Panc1 (cell line): ENCODE measurements at regions of chr17 and their contacts with region 1.

Region 1: DNA sequence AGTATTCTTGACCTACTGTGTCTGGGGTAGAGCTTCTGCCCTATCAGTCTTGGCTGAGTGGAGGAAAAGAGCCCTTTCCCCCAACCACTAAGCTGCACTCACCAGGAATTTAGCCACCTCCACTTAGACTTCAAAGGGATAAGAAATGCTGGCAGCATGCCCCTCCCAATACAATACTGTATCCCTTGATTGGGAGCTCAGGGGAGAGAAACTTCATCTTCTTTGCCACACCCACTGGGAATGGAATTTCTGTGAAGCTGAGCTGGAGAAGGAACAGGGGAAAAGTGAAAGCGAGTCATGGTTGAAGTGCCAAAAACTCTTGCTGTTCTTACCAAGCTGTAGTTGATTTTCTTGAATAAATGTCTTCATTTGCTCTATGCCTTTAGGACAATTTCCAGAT is 68.8 kb downstream of the CEP112 start:
- DNase-seq: no peak
- ATAC-seq: no peak
- H3K4me3 ChIP-seq: no peak overlapping the region
- H3K27ac ChIP-seq: no peak overlapping the region
- H3K4me1 ChIP-seq: no peaks in the 10 kb centered on the region
- H3K27me3 ChIP-seq: no peaks in the 10 kb centered on the region
- CTCF ChIP-seq: no peak

Region 2: DNA sequence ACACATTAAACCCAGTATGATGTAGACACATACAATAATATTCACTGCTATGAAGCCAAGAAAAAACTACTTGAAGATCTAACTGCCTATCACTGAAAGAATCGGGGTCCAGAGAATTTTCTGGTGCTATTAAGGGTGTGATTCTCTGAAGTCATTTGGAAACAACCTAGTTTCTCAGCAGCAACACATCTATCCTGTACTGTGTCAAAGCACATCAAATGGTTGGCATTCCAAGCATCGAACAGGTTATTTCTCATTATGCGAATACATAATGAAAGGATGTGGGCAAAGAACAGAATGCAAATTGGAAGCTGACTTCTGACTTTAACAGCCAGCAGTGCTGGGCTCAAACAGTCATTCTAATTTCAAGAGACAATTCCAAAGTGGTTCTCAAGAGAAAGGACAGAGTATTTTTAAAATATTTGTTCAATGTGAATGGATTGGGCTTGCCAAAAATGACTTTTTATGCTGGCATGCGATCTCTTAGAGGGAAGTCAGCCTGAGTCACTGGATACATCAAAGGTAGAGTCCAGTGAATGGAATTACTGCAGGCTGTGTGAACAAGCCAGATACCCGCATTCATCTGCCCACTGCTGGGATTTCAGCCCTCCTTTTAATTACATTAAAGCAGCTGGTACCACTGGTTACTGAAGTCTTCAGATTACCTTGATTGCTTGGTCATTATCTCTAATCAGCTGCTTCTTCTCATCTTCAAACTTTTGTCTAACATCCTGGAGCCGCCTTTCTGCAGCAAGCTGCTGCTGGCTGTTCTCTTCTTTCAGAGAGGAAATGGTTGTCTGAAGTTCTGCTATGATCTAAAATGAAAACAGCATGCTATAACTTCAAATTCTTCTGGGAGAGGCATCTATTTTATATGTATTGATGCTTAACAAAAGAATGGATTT is 380.5 kb before region 1 on chr17:
- CTCF ChIA-PET with region 1: no interaction called
- POLR2A ChIA-PET with region 1: no interaction called
- in situ Hi-C with region 1: no loop called
- intact Hi-C with region 1: no loop called
- DNase-seq: no peak
- ATAC-seq: peak; percentile 80
- H3K4me3 ChIP-seq: no peak overlapping the region
- H3K27ac ChIP-seq: no peak overlapping the region
- H3K4me1 ChIP-seq: no peaks in the 10 kb centered on the region
- H3K27me3 ChIP-seq: no peaks in the 10 kb centered on the region
- CTCF ChIP-seq: no peak

Region 3: DNA sequence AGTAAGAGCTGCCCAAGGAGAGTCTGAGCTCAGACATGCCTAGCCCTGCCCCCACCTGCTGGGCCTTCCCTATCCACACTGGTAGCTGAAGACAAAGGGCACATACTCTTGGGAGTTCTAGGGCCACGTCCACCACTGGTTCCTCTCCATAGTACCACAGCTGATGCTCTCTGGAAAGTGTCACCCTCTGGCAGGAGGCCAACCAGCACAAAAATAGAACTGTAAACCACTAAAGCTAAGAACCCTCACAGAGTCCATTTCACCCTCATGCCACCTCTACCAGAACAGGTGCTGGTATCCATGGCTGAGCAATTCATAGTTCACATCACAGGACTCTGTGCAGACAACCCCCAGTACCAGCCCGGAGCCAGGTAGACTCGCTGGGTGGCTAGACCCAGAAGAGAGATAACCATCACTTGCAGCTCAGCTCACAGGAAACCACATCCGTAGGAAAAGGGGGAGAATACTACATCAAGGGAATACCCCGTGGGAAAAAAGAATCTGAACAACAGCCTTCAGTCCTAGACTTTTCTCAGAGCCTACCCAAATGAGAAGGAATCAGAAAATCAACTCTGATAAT is 46.5 kb before region 1 on chr17:
- CTCF ChIA-PET with region 1: no interaction called
- POLR2A ChIA-PET with region 1: no interaction called
- in situ Hi-C with region 1: no loop called
- intact Hi-C with region 1: no loop called
- DNase-seq: no peak
- ATAC-seq: no peak
- H3K4me3 ChIP-seq: no peak overlapping the region
- H3K27ac ChIP-seq: no peak overlapping the region
- H3K4me1 ChIP-seq: no peaks in the 10 kb centered on the region
- H3K27me3 ChIP-seq: no peaks in the 10 kb centered on the region
- CTCF ChIP-seq: no peak

Region 4: DNA sequence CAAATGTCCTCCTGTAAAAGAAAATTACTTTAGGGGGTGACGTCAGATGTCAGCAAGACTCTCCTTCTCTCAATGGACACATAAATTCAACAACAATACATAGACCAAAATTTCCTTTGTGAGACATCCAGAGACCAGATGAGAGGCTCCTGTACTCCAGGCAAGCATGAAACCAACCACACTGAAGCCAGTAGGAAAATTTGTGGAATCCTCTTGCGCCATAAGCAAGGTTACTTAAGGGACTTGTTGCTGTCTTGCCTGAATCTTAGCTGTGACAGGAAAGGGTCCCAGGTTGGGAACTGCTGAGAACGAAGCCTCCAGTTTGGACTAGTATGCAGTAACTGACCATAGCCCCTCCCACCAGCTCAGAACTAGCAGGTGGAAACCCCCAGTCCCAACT is 12.7 kb after region 1 on chr17:
- CTCF ChIA-PET with region 1: no interaction called
- POLR2A ChIA-PET with region 1: interaction called, 15 read pairs
- in situ Hi-C with region 1: no loop called
- intact Hi-C with region 1: no loop called
- DNase-seq: no peak
- ATAC-seq: no peak
- H3K4me3 ChIP-seq: no peak overlapping the region
- H3K27ac ChIP-seq: no peak overlapping the region
- H3K4me1 ChIP-seq: no peaks in the 10 kb centered on the region
- H3K27me3 ChIP-seq: no peaks in the 10 kb centered on the region
- CTCF ChIP-seq: no peak